Common myeloid progenitor, CD34-positive (primary cell): ENCODE measurements at regions of chr1 and their contacts with region 1.

Region 1: GRCh38 chr1:26541816-26542711 is 12.5 kb downstream of the RPS6KA1 start:
- DNase-seq: peak; percentile 95 to 98 (median 98)
- H3K4me3 ChIP-seq: peak overlapping the region in 6 of 7 experiments; percentile 30 to 65 (median 39)
- H3K27ac ChIP-seq: peak overlapping the region; percentile 59 to 81
- H3K4me1 ChIP-seq: peaks cover 21 to 99% (median 93%) of the 10 kb centered on the region in 4 experiments
- H3K27me3 ChIP-seq: no peaks in the 10 kb centered on the region

Region 2: GRCh38 chr1:26529655-26530409 is 12.2 kb before region 1 on chr1 and contains the start of gene RPS6KA1:
- CTCF ChIA-PET with region 1: interaction called, 103 read pairs
- POLR2A ChIA-PET with region 1: interaction called, 3 read pairs
- DNase-seq: peak; percentile 35 to 47 (median 46)
- H3K4me3 ChIP-seq: peak within 1 kb of the TSS; percentile 68 to 89 (median 78)
- H3K27ac ChIP-seq: peak within 1 kb of the TSS in 1 of 2 experiments; percentile 58
- H3K4me1 ChIP-seq: peaks cover 8 to 50% (median 37%) of the 10 kb centered on the region in 4 experiments
- H3K27me3 ChIP-seq: no peaks in the 10 kb centered on the region

Region 3: DNA sequence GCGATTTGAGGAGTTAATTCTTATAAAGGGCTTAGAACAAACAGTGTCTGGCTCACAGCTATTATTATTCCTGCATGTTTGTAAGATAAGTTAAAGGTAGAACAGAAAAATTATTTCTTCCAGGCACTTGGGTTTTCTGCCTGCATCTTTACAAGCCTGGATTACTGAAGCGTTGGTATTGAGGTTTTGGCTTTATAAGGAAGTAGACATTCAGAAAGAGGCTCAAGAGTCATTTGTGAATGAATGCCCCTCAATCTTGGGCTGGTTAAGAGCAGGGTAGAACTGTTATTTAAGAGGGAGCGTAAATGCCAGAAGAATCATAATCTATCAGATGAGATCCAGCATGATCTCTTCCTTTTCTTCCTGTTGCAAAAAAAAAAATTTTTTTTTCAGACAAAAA is 76.5 kb after region 1 on chr1:
- CTCF ChIA-PET with region 1: no interaction called
- POLR2A ChIA-PET with region 1: no interaction called
- DNase-seq: peak in 2 of 3 donors; percentile 48 to 49
- H3K4me3 ChIP-seq: no peak overlapping the region
- H3K27ac ChIP-seq: no peak overlapping the region
- H3K4me1 ChIP-seq: peaks cover 17 to 26% (median 22%) of the 10 kb centered on the region in 4 experiments
- H3K27me3 ChIP-seq: no peaks in the 10 kb centered on the region